AG04450 (cell line): ENCODE measurements at regions of chr2 and their contacts with region 1.

Region 1: GRCh38 chr2:158006961-158007719 is 94.5 kb upstream of the UPP2 start:
- DNase-seq: no peak
- H3K4me3 ChIP-seq: no peak overlapping the region
- H3K27ac ChIP-seq: no peak overlapping the region
- H3K27me3 ChIP-seq: peaks cover 3% of the 10 kb centered on the region
- CTCF ChIP-seq: no peak

Region 2: GRCh38 chr2:157489983-157490382 is 517.2 kb before region 1 on chr2:
- CTCF ChIA-PET with region 1: interaction called, 15 read pairs
- POLR2A ChIA-PET with region 1: no interaction called
- DNase-seq: no peak
- H3K4me3 ChIP-seq: no peak overlapping the region
- H3K27ac ChIP-seq: no peak overlapping the region
- H3K27me3 ChIP-seq: no peaks in the 10 kb centered on the region
- CTCF ChIP-seq: no peak

Region 3: GRCh38 chr2:157777427-157777826 is 229.7 kb before region 1 on chr2:
- CTCF ChIA-PET with region 1: interaction called, 41 read pairs
- POLR2A ChIA-PET with region 1: no interaction called
- DNase-seq: peak; percentile 33
- H3K4me3 ChIP-seq: no peak overlapping the region
- H3K27ac ChIP-seq: no peak overlapping the region
- H3K27me3 ChIP-seq: no peaks in the 10 kb centered on the region
- CTCF ChIP-seq: peak; percentile 74

Region 4: GRCh38 chr2:158024288-158024898 is 17.3 kb after region 1 on chr2:
- CTCF ChIA-PET with region 1: interaction called, 42 read pairs
- POLR2A ChIA-PET with region 1: no interaction called
- DNase-seq: no peak
- H3K4me3 ChIP-seq: no peak overlapping the region
- H3K27ac ChIP-seq: no peak overlapping the region
- H3K27me3 ChIP-seq: no peaks in the 10 kb centered on the region
- CTCF ChIP-seq: peak; percentile 87

Region 5: DNA sequence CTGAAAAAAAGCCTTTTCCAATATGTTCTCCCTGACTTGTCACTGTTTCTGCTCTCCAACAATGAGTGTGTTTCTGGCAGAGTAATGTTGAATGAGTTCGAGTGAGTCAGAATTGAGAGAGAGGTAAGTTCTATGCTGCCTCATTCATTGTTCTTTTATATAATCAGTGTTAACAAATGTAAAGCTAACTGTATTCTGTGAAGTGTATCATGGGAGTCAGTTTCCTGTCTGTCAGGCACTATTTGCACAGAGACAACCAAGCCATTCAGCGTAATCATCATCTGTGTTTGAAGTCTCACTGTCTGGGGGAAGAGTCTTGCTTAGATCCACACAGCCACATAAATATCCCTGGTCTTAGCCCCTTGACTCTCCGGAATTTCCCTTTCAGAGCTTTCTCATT is 72.5 kb after region 1 on chr2:
- CTCF ChIA-PET with region 1: no interaction called
- POLR2A ChIA-PET with region 1: no interaction called
- DNase-seq: no peak
- H3K4me3 ChIP-seq: no peak overlapping the region
- H3K27ac ChIP-seq: no peak overlapping the region
- H3K27me3 ChIP-seq: no peaks in the 10 kb centered on the region
- CTCF ChIP-seq: no peak